Left cardiac atrium (tissue), 4 donors: ENCODE measurements at regions of chr11 and their contacts with region 1.

Region 1: GRCh38 chr11:72831513-72832300 is 17.5 kb downstream of the ATG16L2 start:
- DNase-seq: peak; percentile 89
- ATAC-seq: peak; percentile 74 to 82

Region 2: DNA sequence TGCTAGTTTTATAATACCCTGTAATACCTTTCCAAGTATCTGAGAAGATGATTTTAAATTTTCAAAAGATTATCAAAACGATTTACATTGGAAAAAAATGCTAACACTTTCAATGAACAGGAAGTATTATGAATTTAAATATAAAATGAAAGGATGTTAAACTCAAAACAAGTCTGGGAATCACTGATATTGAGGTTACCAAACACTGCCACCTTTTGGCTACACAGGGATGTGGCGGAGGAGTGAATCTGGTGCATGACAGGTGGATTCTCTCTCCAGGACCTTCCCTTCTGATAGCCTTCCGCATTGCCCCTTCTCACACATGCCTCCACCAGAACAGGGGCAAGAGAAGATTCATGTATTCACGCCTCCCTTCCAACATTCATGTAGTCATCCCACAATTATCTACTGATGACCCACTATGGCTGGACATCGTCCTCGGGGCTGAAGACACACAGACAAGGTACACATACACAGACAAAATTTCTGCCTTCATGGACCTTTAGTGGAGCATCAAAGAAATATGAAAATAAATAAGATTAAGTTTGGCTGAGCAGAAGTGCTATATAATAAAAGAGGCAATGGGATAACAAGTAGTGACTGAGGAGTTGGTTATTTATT is 17.2 kb after region 1 on chr11:
- intact Hi-C with region 1: loop called in 1 of 2 experiments (anchors 2 kb)
- DNase-seq: peak; percentile 35
- ATAC-seq: peak; percentile 44 to 54

Region 3: GRCh38 chr11:72885749-72886609 is 54.3 kb after region 1 on chr11:
- intact Hi-C with region 1: no loop called
- DNase-seq: no peak
- ATAC-seq: no peak

Region 4: GRCh38 chr11:73141848-73142286 is 310.2 kb after region 1 on chr11:
- intact Hi-C with region 1: loop called (anchors 10 kb)
- DNase-seq: peak; percentile 86
- ATAC-seq: peak; percentile 56 to 63

Region 5: DNA sequence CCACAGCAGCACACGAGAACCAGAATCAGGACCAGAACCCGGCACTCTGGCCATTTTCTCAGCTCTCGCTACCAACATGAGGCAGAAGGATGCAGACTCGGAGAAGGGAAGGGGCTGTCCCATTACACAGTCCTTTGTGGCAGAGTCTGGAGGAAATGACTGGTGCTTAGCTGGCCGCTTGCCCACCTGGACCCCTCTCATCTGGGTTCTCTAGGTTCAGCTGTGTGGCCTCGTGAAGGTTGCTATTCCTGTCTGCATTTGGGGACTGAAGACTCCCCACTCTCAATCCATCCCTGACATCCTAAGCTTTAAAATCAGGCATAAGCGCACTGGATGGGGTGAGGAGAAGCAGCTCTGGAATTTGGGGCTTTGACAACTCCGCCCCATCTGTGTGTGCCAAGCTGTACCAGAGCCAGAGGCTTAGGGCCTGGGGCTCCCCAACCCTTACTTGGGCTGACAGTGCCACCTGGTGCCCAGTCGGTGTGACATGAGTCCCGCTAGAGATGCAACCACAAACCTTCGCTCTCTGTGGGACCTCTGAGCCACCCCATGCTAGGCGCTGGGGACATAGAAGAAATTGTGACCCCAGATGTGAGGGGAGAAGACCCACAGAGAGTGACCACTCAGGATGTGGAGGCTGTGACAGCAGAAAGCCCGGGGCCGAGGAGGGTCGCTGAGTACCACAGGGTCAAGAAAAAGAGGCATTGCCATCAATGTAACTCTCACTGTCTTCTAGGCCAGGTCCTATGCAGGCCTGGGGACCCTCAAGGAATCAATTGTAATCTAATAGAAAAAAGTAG is 346.3 kb after region 1 on chr11:
- intact Hi-C with region 1: loop called (anchors 1 to 5 kb)
- DNase-seq: peak; percentile 90
- ATAC-seq: peak; percentile 83 to 84

Region 6: GRCh38 chr11:73242251-73243079 is 410.8 kb after region 1 on chr11:
- intact Hi-C with region 1: loop called in 1 of 2 experiments (anchors 2 kb)
- DNase-seq: peak; percentile 83
- ATAC-seq: peak; percentile 66 to 83